ENCODE measurements at regions of chr20 and their contacts with region 1.

Region 1: DNA sequence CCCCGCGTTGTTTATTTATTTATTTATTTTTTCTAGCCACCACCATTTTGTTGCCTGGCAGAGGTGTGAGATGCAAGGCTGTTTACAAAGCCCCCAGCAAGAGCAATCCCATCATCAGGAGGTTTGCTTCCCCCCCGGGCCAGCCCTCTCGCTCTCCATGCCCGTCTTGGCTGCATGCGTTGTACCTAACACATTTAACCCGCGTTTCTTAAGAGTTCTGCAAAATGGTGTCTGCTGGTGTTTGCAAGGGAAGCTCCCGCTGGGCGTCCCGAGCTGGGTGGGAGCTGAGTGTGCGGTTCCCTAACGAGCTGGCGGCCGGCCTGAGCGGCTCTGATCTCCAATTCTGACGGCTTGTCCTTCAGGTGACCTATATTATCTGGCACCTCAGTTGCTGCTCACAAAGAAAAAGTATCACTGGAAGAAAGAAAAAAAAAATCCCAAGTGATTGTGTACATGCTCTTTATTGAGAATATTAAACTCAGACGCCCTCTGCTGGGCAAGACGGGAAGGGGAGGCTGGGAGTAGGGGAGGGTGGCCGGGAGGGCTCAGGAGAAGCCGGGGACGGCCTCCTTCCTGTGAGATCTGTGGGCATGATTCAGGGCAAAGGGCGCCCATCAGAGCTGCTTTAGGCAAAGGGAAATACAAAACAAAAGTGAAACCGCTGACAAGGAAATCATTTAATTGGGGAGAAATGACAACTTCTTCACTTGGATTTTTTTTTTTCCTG is 154.8 kb downstream of the BCAS1 start:
- DNase-seq: peak; percentile 95 to 97 (median 97)
- H3K4me3 ChIP-seq: peak overlapping the region; percentile 51 to 75 (median 68)
- H3K4me3 Mint-ChIP-seq: peak overlapping the region; percentile 92 to 97
- H3K27ac ChIP-seq: peak overlapping the region; percentile 82 to 87
- H3K27ac Mint-ChIP-seq: peak overlapping the region; percentile 94 to 100 (median 98)
- H3K4me1 ChIP-seq: peaks cover 52 to 62% of the 10 kb centered on the region in 2 donors
- H3K4me1 Mint-ChIP-seq: peaks cover 63% of the 10 kb centered on the region
- H3K27me3 ChIP-seq: no peaks in the 10 kb centered on the region
- H3K27me3 Mint-ChIP-seq: peaks cover 0 to 3% (median 1%) of the 10 kb centered on the region in 3 donors
- CTCF ChIP-seq: peak; percentile 84

Region 2: GRCh38 chr20:53643031-53643832 is 272.4 kb before region 1 on chr20:
- intact Hi-C with region 1: loop called in 1 of 2 experiments (anchors 5 kb)
- DNase-seq: peak; percentile 88 to 97 (median 92)
- H3K4me3 ChIP-seq: peak overlapping the region; percentile 24 to 64 (median 41)
- H3K4me3 Mint-ChIP-seq: peak overlapping the region; percentile 70 to 83
- H3K27ac ChIP-seq: peak overlapping the region; percentile 80 to 96
- H3K27ac Mint-ChIP-seq: peak overlapping the region; percentile 94 to 98 (median 96)
- H3K4me1 ChIP-seq: peaks cover 48 to 68% of the 10 kb centered on the region in 2 donors
- H3K4me1 Mint-ChIP-seq: peaks cover 56% of the 10 kb centered on the region
- H3K27me3 ChIP-seq: no peaks in the 10 kb centered on the region
- H3K27me3 Mint-ChIP-seq: no peaks in the 10 kb centered on the region
- CTCF ChIP-seq: no peak

Region 3: GRCh38 chr20:53664113-53664850 is 251.3 kb before region 1 on chr20:
- intact Hi-C with region 1: no loop called
- DNase-seq: no peak
- H3K4me3 ChIP-seq: no peak overlapping the region
- H3K4me3 Mint-ChIP-seq: no peak overlapping the region
- H3K27ac ChIP-seq: no peak overlapping the region
- H3K27ac Mint-ChIP-seq: no peak overlapping the region
- H3K4me1 ChIP-seq: peaks cover 36 to 42% of the 10 kb centered on the region in 2 donors
- H3K4me1 Mint-ChIP-seq: peaks cover 36% of the 10 kb centered on the region
- H3K27me3 ChIP-seq: no peaks in the 10 kb centered on the region
- H3K27me3 Mint-ChIP-seq: no peaks in the 10 kb centered on the region
- CTCF ChIP-seq: no peak

Region 4: GRCh38 chr20:53828682-53829254 is 86.8 kb before region 1 on chr20:
- intact Hi-C with region 1: loop called (anchors 5 to 10 kb)
- DNase-seq: peak in 1 of 3 donors; percentile 12
- H3K4me3 ChIP-seq: peak overlapping the region; percentile 19 to 70 (median 47)
- H3K4me3 Mint-ChIP-seq: peak overlapping the region; percentile 56 to 88
- H3K27ac ChIP-seq: peak overlapping the region; percentile 32 to 92
- H3K27ac Mint-ChIP-seq: peak overlapping the region; percentile 1 to 94 (median 85)
- H3K4me1 ChIP-seq: peaks cover 40 to 52% of the 10 kb centered on the region in 2 donors
- H3K4me1 Mint-ChIP-seq: peaks cover 52% of the 10 kb centered on the region
- H3K27me3 ChIP-seq: no peaks in the 10 kb centered on the region
- H3K27me3 Mint-ChIP-seq: peaks cover 0 to 3% (median 1%) of the 10 kb centered on the region in 3 donors
- CTCF ChIP-seq: no peak

Region 5: GRCh38 chr20:53878578-53879363 is 36.8 kb before region 1 on chr20:
- intact Hi-C with region 1: loop called in 1 of 2 experiments (anchors 5 kb)
- DNase-seq: no peak
- H3K4me3 ChIP-seq: no peak overlapping the region
- H3K4me3 Mint-ChIP-seq: peak overlapping the region in 1 of 2 donors; percentile 7
- H3K27ac ChIP-seq: no peak overlapping the region
- H3K27ac Mint-ChIP-seq: no peak overlapping the region
- H3K4me1 ChIP-seq: peaks cover 9 to 10% of the 10 kb centered on the region in 2 donors
- H3K4me1 Mint-ChIP-seq: peaks cover 20% of the 10 kb centered on the region
- H3K27me3 ChIP-seq: no peaks in the 10 kb centered on the region
- H3K27me3 Mint-ChIP-seq: peaks cover 0 to 6% (median 1%) of the 10 kb centered on the region in 3 donors
- CTCF ChIP-seq: no peak

Measured in CD14-positive monocyte (primary cell).